Prostate gland (tissue), 2 donors: ENCODE measurements at regions of chr9 and their contacts with region 1.

Region 1: GRCh38 chr9:126781186-126782052 is 23.4 kb upstream of the ZBTB43 start:
- DNase-seq: peak; percentile 76
- H3K4me3 ChIP-seq: no peak overlapping the region
- H3K27ac ChIP-seq: no peak overlapping the region
- H3K4me1 ChIP-seq: no peaks in the 10 kb centered on the region
- H3K27me3 ChIP-seq: peaks cover 4% of the 10 kb centered on the region
- CTCF ChIP-seq: peak; percentile 91 to 94 (median 92)
- POLR2A ChIP-seq: no peak

Region 2: GRCh38 chr9:126611592-126612325 is 169.7 kb before region 1 on chr9:
- intact Hi-C with region 1: loop called (anchors 10 kb)
- DNase-seq: peak; percentile 56
- H3K4me3 ChIP-seq: no peak overlapping the region
- H3K27ac ChIP-seq: no peak overlapping the region
- H3K4me1 ChIP-seq: peaks cover 3% of the 10 kb centered on the region
- H3K27me3 ChIP-seq: peaks cover 40% of the 10 kb centered on the region
- CTCF ChIP-seq: peak; percentile 71 to 86 (median 80)
- POLR2A ChIP-seq: no peak

Region 3: GRCh38 chr9:126704873-126705766 is 76.3 kb before region 1 on chr9:
- intact Hi-C with region 1: loop called (anchors 1 kb)
- DNase-seq: peak; percentile 79
- H3K4me3 ChIP-seq: no peak overlapping the region
- H3K27ac ChIP-seq: no peak overlapping the region
- H3K4me1 ChIP-seq: no peaks in the 10 kb centered on the region
- H3K27me3 ChIP-seq: no peaks in the 10 kb centered on the region
- CTCF ChIP-seq: peak; percentile 89 to 96 (median 93)
- POLR2A ChIP-seq: no peak

Region 4: DNA sequence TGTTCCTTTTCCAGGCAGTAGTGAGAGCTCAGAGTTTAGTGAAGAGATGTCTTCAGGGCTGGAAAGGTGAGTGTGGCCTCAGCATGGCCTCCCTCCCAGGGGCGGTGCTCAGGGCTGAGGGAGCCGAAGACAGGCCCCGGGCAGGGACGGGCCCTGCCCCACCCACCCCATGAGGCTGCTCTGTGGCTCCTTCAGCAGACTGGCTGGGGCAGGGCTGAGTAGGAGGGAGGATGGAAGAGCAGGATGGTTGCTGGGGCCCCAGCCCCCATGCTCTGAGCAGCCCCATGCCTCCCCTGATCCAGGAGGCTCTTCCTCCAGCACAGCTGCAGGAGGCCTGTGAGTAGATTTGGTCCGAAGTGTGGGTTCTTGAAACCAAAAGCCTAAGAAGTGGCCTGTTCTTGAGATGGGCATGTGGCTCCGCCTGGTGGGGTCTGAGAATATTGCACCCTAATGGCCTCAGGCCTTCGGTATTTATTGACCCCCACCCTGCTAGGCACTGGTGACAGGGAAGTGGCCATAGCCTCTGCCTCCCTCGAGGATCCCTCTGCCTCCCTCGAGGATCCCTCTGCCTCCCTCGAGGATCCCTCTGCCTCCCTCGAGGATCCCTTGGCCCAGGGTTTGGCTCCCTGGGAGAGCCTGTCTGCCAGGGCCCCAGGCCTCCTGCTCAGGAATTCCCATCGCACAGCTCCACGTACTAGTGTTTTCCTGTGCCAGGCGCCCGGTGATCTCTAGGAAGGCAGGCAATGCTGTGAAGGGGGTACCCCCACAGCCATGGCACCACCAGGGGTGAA is 417.8 kb after region 1 on chr9:
- intact Hi-C with region 1: no loop called
- DNase-seq: peak; percentile 71
- H3K4me3 ChIP-seq: no peak overlapping the region
- H3K27ac ChIP-seq: peak overlapping the region in 1 of 2 donors; percentile 22
- H3K4me1 ChIP-seq: no peaks in the 10 kb centered on the region
- H3K27me3 ChIP-seq: no peaks in the 10 kb centered on the region
- CTCF ChIP-seq: peak; percentile 91 to 99 (median 97)
- POLR2A ChIP-seq: no peak